ENCODE measurements at regions of chr2 and their contacts with region 1.

Region 1: GRCh38 chr2:216412022-216412999 is at the start of gene SMARCAL1:
- DNase-seq: peak; percentile 97 to 99
- ATAC-seq: peak; percentile 95 to 96 (median 96)
- H3K4me3 ChIP-seq: peak within 1 kb of the TSS; percentile 93
- H3K4me3 Mint-ChIP-seq: peak within 1 kb of the TSS; percentile 99
- H3K27ac ChIP-seq: peak within 1 kb of the TSS; percentile 92
- H3K27ac Mint-ChIP-seq: peak within 1 kb of the TSS; percentile 95 to 98
- H3K4me1 ChIP-seq: peaks cover 20% of the 10 kb centered on the region
- H3K4me1 Mint-ChIP-seq: peaks cover 18 to 21% of the 10 kb centered on the region in 2 donors
- H3K27me3 ChIP-seq: no peaks in the 10 kb centered on the region
- H3K27me3 Mint-ChIP-seq: peaks cover 0 to 3% of the 10 kb centered on the region in 2 donors
- CTCF ChIP-seq: no peak
- total RNA-seq, gene SMARCAL1: 18.7 to 25.6 (median 22.8) TPM

Region 2: DNA sequence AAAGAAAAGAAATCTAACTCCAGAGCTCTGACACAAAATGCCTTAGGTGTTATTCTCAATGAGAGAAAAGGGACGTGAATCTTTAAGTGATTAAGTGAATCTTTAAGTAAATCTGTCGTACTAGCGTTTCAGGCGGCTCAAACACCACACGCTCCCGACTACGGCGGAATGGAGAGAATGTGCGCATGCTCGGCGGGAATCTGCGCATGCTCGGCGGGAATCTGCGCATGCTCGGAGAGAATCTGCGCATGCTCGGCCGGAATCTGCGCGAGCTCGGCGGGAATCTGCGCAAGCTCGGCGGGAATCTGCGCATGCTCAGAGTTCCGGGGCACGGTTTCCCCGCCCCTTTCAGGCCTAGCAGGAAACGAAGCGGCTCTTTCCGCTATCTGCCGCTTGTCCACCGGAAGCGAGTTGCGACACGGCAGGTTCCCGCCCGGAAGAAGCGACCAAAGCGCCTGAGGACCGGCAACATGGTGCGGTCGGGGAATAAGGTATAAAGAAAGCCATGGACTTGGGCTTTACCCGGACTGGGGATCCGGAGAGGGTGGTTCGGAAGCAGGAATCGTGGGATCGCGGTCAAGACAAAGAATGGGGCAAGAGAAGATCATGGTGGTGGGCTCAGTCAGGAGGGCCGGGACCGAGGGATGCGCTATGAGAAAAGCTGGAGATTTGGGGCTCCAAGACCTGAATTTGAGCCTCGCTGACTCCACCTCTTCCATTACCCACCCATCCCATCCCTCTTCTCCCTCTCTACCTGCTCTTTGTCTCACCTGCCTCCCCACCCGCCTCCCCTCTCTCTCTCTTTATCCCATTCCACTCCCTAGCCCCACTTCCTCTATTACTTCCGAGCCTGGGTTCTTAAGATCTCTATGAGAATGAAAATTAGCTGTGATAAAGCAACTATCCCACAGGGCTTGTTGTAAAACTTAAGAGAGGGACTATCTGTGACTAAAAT is 303.1 kb before region 1 on chr2 and contains the start of gene XRCC5:
- intact Hi-C with region 1: loop called (anchors 1 kb)
- DNase-seq: peak; percentile 98 to 100
- ATAC-seq: peak; percentile 87 to 92 (median 91)
- H3K4me3 ChIP-seq: peak within 1 kb of the TSS; percentile 99
- H3K4me3 Mint-ChIP-seq: peak within 1 kb of the TSS; percentile 100
- H3K27ac ChIP-seq: peak within 1 kb of the TSS; percentile 96
- H3K27ac Mint-ChIP-seq: peak within 1 kb of the TSS; percentile 98 to 100
- H3K4me1 ChIP-seq: peaks cover 7% of the 10 kb centered on the region
- H3K4me1 Mint-ChIP-seq: peaks cover 54 to 56% of the 10 kb centered on the region in 2 donors
- H3K27me3 ChIP-seq: no peaks in the 10 kb centered on the region
- H3K27me3 Mint-ChIP-seq: no peaks in the 10 kb centered on the region
- CTCF ChIP-seq: no peak
- total RNA-seq, gene XRCC5: 188 to 220 (median 201) TPM

Region 3: DNA sequence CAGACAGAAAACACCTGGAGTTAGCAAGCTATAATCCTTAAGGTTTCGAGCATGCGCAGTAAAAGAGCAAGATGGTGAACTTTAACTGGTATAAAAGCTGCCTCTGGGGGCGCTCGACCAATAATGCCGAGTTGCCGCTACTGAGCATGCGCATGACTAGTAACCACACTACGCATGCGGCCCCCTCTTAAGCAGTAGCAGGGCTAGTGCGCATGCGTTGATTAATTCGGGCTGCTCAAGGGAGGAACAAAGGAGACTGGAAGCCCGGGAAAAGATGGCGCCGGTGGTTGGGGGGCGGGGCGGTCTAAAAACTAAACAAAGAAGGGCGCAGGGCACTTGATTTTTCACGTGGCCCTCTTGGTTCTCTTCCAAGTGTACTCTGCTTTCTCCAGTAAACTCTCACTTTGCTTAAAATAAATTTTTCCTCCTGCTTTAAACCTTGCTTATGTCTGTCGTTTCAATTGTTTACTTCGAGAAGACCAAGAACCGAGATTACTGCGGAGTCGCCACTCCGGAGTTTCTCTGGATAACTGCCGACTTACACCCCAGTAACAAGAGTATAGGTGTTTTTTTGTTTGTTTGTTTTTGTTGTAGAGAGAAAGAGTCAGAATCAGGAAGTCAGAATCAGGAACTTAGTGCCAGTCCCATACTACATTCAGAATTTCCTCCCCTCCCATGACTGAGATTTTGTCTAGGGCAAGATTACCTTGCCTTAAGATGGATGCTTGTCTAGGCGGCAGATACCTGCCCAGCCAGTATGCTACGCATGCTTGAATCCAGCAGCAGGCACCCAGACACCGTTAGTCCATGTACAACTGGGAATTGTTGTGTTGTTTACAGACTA is 297.4 kb before region 1 on chr2:
- intact Hi-C with region 1: loop called (anchors 2 kb)
- DNase-seq: peak; percentile 96 to 100
- ATAC-seq: peak; percentile 89 to 98 (median 91)
- H3K4me3 ChIP-seq: peak overlapping the region; percentile 39
- H3K4me3 Mint-ChIP-seq: peak overlapping the region; percentile 90
- H3K27ac ChIP-seq: peak overlapping the region; percentile 63
- H3K27ac Mint-ChIP-seq: peak overlapping the region; percentile 89 to 98
- H3K4me1 ChIP-seq: peaks cover 15% of the 10 kb centered on the region
- H3K4me1 Mint-ChIP-seq: peaks cover 77 to 86% of the 10 kb centered on the region in 2 donors
- H3K27me3 ChIP-seq: no peaks in the 10 kb centered on the region
- H3K27me3 Mint-ChIP-seq: no peaks in the 10 kb centered on the region
- CTCF ChIP-seq: peak; percentile 81

Region 4: DNA sequence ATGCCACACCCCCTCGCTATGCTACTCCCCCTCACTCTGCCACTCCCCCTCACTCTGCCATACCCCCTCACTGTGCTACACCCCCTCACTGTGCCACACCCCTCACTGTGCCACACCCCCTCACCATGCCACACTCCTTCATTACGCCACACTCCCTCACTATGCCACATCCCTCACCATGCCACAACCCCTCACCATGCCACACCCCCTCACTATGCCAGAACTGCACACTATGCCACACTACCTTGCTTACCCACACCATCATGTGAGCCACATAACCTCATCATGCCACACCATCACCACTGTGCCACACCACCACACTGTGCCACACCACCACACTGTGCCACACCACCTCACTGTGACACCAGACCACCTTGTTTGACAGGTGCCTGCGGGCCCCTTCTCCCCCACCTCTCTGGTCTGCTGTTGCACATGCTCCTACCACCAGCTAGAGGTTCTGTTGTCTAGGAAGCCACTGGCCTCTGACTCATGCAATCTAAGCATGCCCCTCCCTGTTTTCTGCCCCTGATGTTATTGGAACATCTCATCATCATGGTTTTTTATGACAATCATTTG is 62.0 kb before region 1 on chr2:
- intact Hi-C with region 1: loop called (anchors 1 kb)
- DNase-seq: peak; percentile 47 to 65
- ATAC-seq: peak; percentile 75 to 80 (median 76)
- H3K4me3 ChIP-seq: no peak overlapping the region
- H3K4me3 Mint-ChIP-seq: peak overlapping the region; percentile 80
- H3K27ac ChIP-seq: peak overlapping the region; percentile 63
- H3K27ac Mint-ChIP-seq: peak overlapping the region; percentile 86 to 95
- H3K4me1 ChIP-seq: peaks cover 58% of the 10 kb centered on the region
- H3K4me1 Mint-ChIP-seq: peaks cover 74 to 78% of the 10 kb centered on the region in 2 donors
- H3K27me3 ChIP-seq: no peaks in the 10 kb centered on the region
- H3K27me3 Mint-ChIP-seq: no peaks in the 10 kb centered on the region
- CTCF ChIP-seq: no peak

Region 5: GRCh38 chr2:216445501-216445900 is 33.2 kb after region 1 on chr2:
- intact Hi-C with region 1: no loop called
- DNase-seq: no peak
- ATAC-seq: no peak
- H3K4me3 ChIP-seq: no peak overlapping the region
- H3K4me3 Mint-ChIP-seq: no peak overlapping the region
- H3K27ac ChIP-seq: no peak overlapping the region
- H3K27ac Mint-ChIP-seq: no peak overlapping the region
- H3K4me1 ChIP-seq: no peaks in the 10 kb centered on the region
- H3K4me1 Mint-ChIP-seq: no peaks in the 10 kb centered on the region
- H3K27me3 ChIP-seq: no peaks in the 10 kb centered on the region
- H3K27me3 Mint-ChIP-seq: no peaks in the 10 kb centered on the region
- CTCF ChIP-seq: no peak

Region 6: GRCh38 chr2:216498418-216499413 is 86.4 kb after region 1 on chr2 and contains the start of gene RPL37A:
- intact Hi-C with region 1: loop called (anchors 2 kb)
- DNase-seq: peak; percentile 84 to 96
- ATAC-seq: peak; percentile 96 to 97 (median 97)
- H3K4me3 ChIP-seq: peak within 1 kb of the TSS; percentile 89
- H3K4me3 Mint-ChIP-seq: peak within 1 kb of the TSS; percentile 96
- H3K27ac ChIP-seq: peak within 1 kb of the TSS; percentile 78
- H3K27ac Mint-ChIP-seq: peak within 1 kb of the TSS; percentile 92 to 98
- H3K4me1 ChIP-seq: peaks cover 19% of the 10 kb centered on the region
- H3K4me1 Mint-ChIP-seq: peaks cover 40 to 52% of the 10 kb centered on the region in 2 donors
- H3K27me3 ChIP-seq: no peaks in the 10 kb centered on the region
- H3K27me3 Mint-ChIP-seq: no peaks in the 10 kb centered on the region
- CTCF ChIP-seq: no peak
- total RNA-seq, gene RPL37A: 1,429 to 1,793 (median 1,744) TPM